PC-9 (cell line): ENCODE measurements at regions of chr21 and their contacts with region 1.

Region 1: GRCh38 chr21:23016405-23017016 is 2018.3 kb downstream of the NCAM2 start:
- DNase-seq: peak in 1 of 2 experiments; percentile 2
- H3K4me3 ChIP-seq: no peak overlapping the region
- H3K27ac ChIP-seq: no peak overlapping the region
- H3K4me1 ChIP-seq: no peaks in the 10 kb centered on the region
- H3K27me3 ChIP-seq: no peaks in the 10 kb centered on the region
- CTCF ChIP-seq: peak; percentile 41; the same call in 1 of the 2 replicates

Region 2: GRCh38 chr21:22575165-22575584 is 441.3 kb before region 1 on chr21:
- CTCF ChIA-PET with region 1: no interaction called
- POLR2A ChIA-PET with region 1: no interaction called
- intact Hi-C with region 1: loop called (anchors 10 kb)
- DNase-seq: no peak
- H3K4me3 ChIP-seq: no peak overlapping the region
- H3K27ac ChIP-seq: no peak overlapping the region
- H3K4me1 ChIP-seq: no peaks in the 10 kb centered on the region
- H3K27me3 ChIP-seq: no peaks in the 10 kb centered on the region
- CTCF ChIP-seq: peak; percentile 45; the same call in 1 of the 2 replicates

Region 3: DNA sequence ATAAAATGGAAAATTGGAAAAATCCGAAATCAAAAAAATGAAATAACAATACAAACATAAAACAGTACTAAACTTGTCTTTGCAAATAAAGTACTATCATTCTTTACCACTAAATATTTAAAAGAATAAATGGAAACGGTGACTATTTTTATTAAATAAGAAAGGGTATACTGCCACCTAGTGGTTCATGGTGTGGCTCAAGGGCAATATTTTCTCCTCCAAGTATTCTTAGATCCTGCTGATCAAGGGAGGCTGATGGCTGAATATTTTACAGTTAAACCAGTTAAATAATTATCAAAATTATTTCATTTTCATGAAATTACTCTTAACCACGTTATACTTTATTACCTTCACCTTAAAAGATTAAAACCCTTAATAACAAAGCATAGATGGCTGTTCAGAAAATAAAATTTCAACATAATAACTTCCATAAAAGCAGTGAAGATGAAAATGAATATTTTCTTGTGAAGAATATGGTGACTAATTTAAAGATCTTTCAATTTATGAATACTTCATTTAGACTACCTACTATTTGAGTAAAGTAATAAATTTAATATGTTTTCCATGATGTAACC is 224.4 kb before region 1 on chr21:
- CTCF ChIA-PET with region 1: interaction called, 4 read pairs
- POLR2A ChIA-PET with region 1: no interaction called
- intact Hi-C with region 1: loop called (anchors 5 kb)
- DNase-seq: no peak
- H3K4me3 ChIP-seq: no peak overlapping the region
- H3K27ac ChIP-seq: no peak overlapping the region
- H3K4me1 ChIP-seq: no peaks in the 10 kb centered on the region
- H3K27me3 ChIP-seq: no peaks in the 10 kb centered on the region
- CTCF ChIP-seq: peak; percentile 78